ENCODE measurements at regions of chr17 and their contacts with region 1.

Region 1: GRCh38 chr17:31533546-31534155 is 142.2 kb downstream of the RAB11FIP4 start:
- DNase-seq: peak; percentile 49
- ATAC-seq: peak; percentile 38
- H3K4me3 Mint-ChIP-seq: no peak overlapping the region
- H3K27ac Mint-ChIP-seq: no peak overlapping the region
- H3K4me1 Mint-ChIP-seq: peaks cover 17% of the 10 kb centered on the region
- H3K27me3 Mint-ChIP-seq: no peaks in the 10 kb centered on the region
- CTCF ChIP-seq: no peak

Region 2: GRCh38 chr17:31388770-31389661 is 144.6 kb before region 1 on chr17:
- CTCF ChIA-PET with region 1: interaction called, 12 read pairs
- POLR2A ChIA-PET with region 1: interaction called, 3 read pairs
- intact Hi-C with region 1: loop called (anchors 5 kb)
- DNase-seq: peak; percentile 59
- ATAC-seq: peak; percentile 69
- H3K4me3 Mint-ChIP-seq: no peak overlapping the region
- H3K27ac Mint-ChIP-seq: no peak overlapping the region
- H3K4me1 Mint-ChIP-seq: peaks cover 5% of the 10 kb centered on the region
- H3K27me3 Mint-ChIP-seq: peaks cover 38% of the 10 kb centered on the region
- CTCF ChIP-seq: peak; percentile 87

Region 3: DNA sequence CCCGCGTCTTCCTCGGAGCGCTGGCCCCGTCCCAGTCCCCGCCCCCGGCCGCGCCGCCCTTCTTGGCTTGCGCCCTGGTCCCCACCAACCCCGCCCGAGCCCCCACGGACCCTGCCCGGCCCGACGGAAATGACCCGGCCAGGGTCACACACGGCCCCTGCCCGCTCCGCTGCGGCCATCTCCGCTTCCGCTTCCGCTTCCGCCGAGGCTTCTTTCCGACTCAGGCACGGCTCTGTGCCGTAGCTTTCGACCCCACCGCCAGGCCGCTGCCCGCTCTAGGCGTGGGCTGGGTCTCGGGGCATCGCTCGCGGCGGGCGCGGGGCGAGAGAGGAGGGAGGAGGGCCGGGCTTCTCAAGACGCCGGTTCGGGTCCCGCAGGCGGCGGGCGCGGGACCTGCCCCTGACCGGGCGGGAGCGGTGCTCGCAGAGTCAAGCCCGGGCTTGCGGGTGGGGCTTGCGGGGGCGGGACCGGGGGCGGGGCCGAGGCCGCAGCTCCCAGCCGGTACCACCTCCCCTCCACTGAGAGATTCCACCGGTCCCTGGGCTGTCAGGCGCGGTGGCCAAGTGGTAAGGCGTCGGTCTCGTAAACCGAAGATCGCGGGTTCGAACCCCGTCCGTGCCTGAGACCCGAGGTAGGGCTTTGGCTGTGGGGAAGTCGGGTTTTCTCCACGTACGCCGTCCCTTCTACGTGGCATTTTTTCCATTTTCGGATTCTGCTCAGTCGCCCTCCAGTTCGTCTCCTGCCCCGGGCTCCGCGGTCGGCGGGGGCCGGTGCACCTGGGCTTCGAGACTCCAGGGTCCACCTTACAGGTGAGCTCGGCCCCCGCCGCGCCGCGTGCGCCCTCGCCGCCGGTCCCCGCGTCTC is 16.1 kb after region 1 on chr17:
- CTCF ChIA-PET with region 1: interaction called, 3 read pairs
- POLR2A ChIA-PET with region 1: interaction called, 12 read pairs
- intact Hi-C with region 1: no loop called
- DNase-seq: peak; percentile 93
- ATAC-seq: peak; percentile 82
- H3K4me3 Mint-ChIP-seq: peak overlapping the region; percentile 87
- H3K27ac Mint-ChIP-seq: peak overlapping the region; percentile 94
- H3K4me1 Mint-ChIP-seq: peaks cover 17% of the 10 kb centered on the region
- H3K27me3 Mint-ChIP-seq: no peaks in the 10 kb centered on the region
- CTCF ChIP-seq: no peak